ENCODE measurements at regions of chr17 and their contacts with region 1.

Region 1: GRCh38 chr17:58692239-58693055 is at the start of gene RAD51C:
- DNase-seq: peak; percentile 92
- ATAC-seq: peak; percentile 98
- H3K4me3 Mint-ChIP-seq: peak within 1 kb of the TSS; percentile 86
- H3K27ac Mint-ChIP-seq: peak within 1 kb of the TSS; percentile 94
- H3K4me1 Mint-ChIP-seq: peaks cover 23% of the 10 kb centered on the region
- H3K27me3 Mint-ChIP-seq: no peaks in the 10 kb centered on the region
- CTCF ChIP-seq: no peak
- total RNA-seq, gene RAD51C: 73.3 to 76.8 TPM

Region 2: GRCh38 chr17:58658804-58659713 is 33.4 kb before region 1 on chr17:
- CTCF ChIA-PET with region 1: no interaction called
- POLR2A ChIA-PET with region 1: interaction called, 36 read pairs
- intact Hi-C with region 1: no loop called
- DNase-seq: peak; percentile 93
- ATAC-seq: peak; percentile 91
- H3K4me3 Mint-ChIP-seq: peak overlapping the region; percentile 72
- H3K27ac Mint-ChIP-seq: peak overlapping the region; percentile 99
- H3K4me1 Mint-ChIP-seq: peaks cover 18% of the 10 kb centered on the region
- H3K27me3 Mint-ChIP-seq: peaks cover 9% of the 10 kb centered on the region
- CTCF ChIP-seq: no peak

Region 3: GRCh38 chr17:58666858-58667619 is 25.4 kb before region 1 on chr17:
- CTCF ChIA-PET with region 1: no interaction called
- POLR2A ChIA-PET with region 1: interaction called, 10 read pairs
- intact Hi-C with region 1: no loop called
- DNase-seq: peak; percentile 59
- ATAC-seq: peak; percentile 37
- H3K4me3 Mint-ChIP-seq: no peak overlapping the region
- H3K27ac Mint-ChIP-seq: no peak overlapping the region
- H3K4me1 Mint-ChIP-seq: peaks cover 7% of the 10 kb centered on the region
- H3K27me3 Mint-ChIP-seq: peaks cover 10% of the 10 kb centered on the region
- CTCF ChIP-seq: no peak

Measured in activated CD8-positive, alpha-beta T cell treated with anti-CD3 and anti-CD28 coated beads for 36 hours (primary cell).